Naive thymus-derived CD4-positive, alpha-beta T cell (primary cell): ENCODE measurements at regions of chr21 and their contacts with region 1.

Region 1: DNA sequence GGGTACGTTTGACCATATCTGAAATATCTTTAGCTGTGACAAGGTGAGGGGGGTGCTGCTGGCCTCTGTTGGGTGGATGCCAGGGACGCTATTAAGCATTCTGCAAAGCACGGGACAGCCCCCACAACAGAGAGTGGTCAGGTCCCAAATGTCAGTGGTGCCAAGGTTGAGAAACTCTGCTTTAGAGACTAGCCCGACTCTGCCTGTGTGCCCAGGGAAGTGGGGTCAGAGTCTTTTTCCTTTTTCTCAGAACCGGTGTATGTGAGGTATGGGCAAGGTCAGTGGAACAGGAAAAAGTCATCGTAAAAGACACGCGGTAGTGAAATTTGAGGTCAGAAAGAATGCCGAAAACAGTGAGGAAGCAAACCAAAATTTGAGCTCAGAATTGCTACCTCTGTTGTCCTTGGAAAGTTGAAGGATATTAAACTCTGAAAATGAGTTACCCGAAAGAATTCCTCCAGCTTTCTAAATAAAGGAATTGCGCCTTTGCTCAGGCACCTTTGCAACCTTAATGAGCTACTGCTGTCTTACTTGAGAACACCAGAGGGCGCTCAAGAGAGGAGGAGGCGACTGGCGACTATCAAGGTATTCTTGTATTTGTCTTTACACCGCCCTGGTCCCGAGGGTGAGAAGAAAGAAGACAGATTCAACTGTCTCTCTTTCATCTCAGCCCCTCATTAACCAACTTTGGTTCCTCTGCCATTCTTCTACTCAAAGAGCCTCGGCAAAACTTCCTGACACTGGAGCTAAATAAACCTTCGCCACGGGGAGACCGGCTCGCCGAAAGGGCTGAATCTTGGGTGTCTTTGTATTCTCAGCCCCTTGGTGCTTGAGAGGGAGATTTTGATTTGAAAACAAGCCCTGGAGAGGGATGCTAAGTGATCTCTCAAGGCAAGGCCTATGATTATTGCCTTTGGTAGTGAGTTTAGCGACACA is 85.4 kb upstream of the OLIG2 start:
- DNase-seq: peak in 8 of 9 donors; percentile 23 to 53 (median 40)
- ATAC-seq: peak; percentile 68
- H3K4me3 ChIP-seq: no peak overlapping the region
- H3K4me3 Mint-ChIP-seq: peak overlapping the region in 2 of 10 donors; percentile 28 to 45
- H3K27ac ChIP-seq: no peak overlapping the region
- H3K27ac Mint-ChIP-seq: no peak overlapping the region
- H3K4me1 ChIP-seq: no peaks in the 10 kb centered on the region
- H3K4me1 Mint-ChIP-seq: peaks cover 0 to 9% (median 6%) of the 10 kb centered on the region in 7 donors
- H3K27me3 ChIP-seq: no peaks in the 10 kb centered on the region
- H3K27me3 Mint-ChIP-seq: peaks cover 0 to 14% (median 0%) of the 10 kb centered on the region in 5 donors

Region 2: DNA sequence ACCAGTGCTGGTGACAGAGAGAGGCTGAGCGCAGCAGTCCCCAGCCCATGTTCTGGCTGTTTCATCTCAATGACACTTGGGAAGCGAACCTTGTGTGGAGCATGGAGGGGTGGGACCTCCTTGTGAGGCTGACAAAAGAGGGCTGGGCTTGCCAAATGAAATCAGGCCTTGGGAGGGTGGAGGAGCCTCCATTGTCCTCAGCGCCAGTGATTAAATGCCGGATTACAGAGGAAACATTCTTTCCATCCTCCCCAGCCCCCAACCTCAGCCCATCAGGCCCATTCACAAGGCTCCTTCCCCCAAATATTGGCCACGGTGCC is 105.5 kb before region 1 on chr21:
- CTCF ChIA-PET with region 1: interaction called, 7 read pairs
- POLR2A ChIA-PET with region 1: no interaction called
- intact Hi-C with region 1: loop called in 1 of 2 experiments (anchors 5 kb)
- DNase-seq: no peak
- ATAC-seq: no peak
- H3K4me3 ChIP-seq: no peak overlapping the region
- H3K4me3 Mint-ChIP-seq: no peak overlapping the region
- H3K27ac ChIP-seq: no peak overlapping the region
- H3K27ac Mint-ChIP-seq: no peak overlapping the region
- H3K4me1 ChIP-seq: no peaks in the 10 kb centered on the region
- H3K4me1 Mint-ChIP-seq: peaks cover 0 to 2% (median 0%) of the 10 kb centered on the region in 7 donors
- H3K27me3 ChIP-seq: peaks cover 0 to 5% of the 10 kb centered on the region in 2 donors
- H3K27me3 Mint-ChIP-seq: peaks cover 0 to 30% (median 0%) of the 10 kb centered on the region in 5 donors

Region 3: GRCh38 chr21:32916522-32917099 is 23.7 kb before region 1 on chr21:
- CTCF ChIA-PET with region 1: interaction called, 11 read pairs
- POLR2A ChIA-PET with region 1: no interaction called
- intact Hi-C with region 1: no loop called
- DNase-seq: no peak
- ATAC-seq: no peak
- H3K4me3 ChIP-seq: no peak overlapping the region
- H3K4me3 Mint-ChIP-seq: peak overlapping the region in 1 of 10 donors; percentile 52
- H3K27ac ChIP-seq: no peak overlapping the region
- H3K27ac Mint-ChIP-seq: peak overlapping the region in 8 of 9 donors; percentile 11 to 90 (median 76)
- H3K4me1 ChIP-seq: peaks cover 23 to 33% of the 10 kb centered on the region in 2 donors
- H3K4me1 Mint-ChIP-seq: peaks cover 18 to 49% (median 45%) of the 10 kb centered on the region in 7 donors
- H3K27me3 ChIP-seq: no peaks in the 10 kb centered on the region
- H3K27me3 Mint-ChIP-seq: peaks cover 0 to 7% (median 0%) of the 10 kb centered on the region in 5 donors

Region 4: GRCh38 chr21:33278721-33279120 is 338.4 kb after region 1 on chr21:
- CTCF ChIA-PET with region 1: no interaction called
- POLR2A ChIA-PET with region 1: no interaction called
- intact Hi-C with region 1: no loop called
- DNase-seq: no peak
- ATAC-seq: no peak
- H3K4me3 ChIP-seq: no peak overlapping the region
- H3K4me3 Mint-ChIP-seq: no peak overlapping the region
- H3K27ac ChIP-seq: no peak overlapping the region
- H3K27ac Mint-ChIP-seq: no peak overlapping the region
- H3K4me1 ChIP-seq: peaks cover 0 to 3% of the 10 kb centered on the region in 2 donors
- H3K4me1 Mint-ChIP-seq: peaks cover 9 to 24% (median 15%) of the 10 kb centered on the region in 7 donors
- H3K27me3 ChIP-seq: no peaks in the 10 kb centered on the region
- H3K27me3 Mint-ChIP-seq: no peaks in the 10 kb centered on the region